ENCODE measurements at regions of chrX and their contacts with region 1.

Region 1: DNA sequence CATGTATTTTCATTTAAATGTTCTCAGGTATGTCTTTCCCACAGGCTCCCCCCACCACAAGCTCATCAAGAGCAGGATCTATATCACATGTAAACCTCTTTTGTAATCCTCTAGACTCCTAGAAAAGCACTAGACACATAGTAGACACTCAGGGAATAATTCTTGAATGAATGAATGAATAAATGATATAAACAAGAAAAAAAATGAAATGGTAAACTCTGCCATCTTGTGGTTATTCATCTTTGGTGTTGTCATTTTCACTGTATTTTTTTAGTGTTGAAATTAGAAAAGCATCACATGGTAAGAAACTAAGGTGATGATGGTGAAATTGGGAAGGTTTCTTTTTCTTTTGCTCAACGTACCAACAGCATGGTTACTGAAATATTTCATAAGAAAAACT is 34.2 kb upstream of the C1GALT1C1 start:
- DNase-seq: no peak
- ATAC-seq: no peak
- H3K4me3 ChIP-seq: no peak overlapping the region
- H3K27ac ChIP-seq: no peak overlapping the region
- H3K4me1 ChIP-seq: no peaks in the 10 kb centered on the region
- H3K27me3 ChIP-seq: no peaks in the 10 kb centered on the region
- CTCF ChIP-seq: peak in 5 of 9 donors; percentile 28 to 42 (median 34)

Region 2: GRCh38 chrX:120499301-120500072 is 164.6 kb before region 1 on chrX:
- intact Hi-C with region 1: loop called in 6 of 10 experiments (anchors 5 to 10 kb)
- DNase-seq: peak in 1 of 2 donors; percentile 11
- ATAC-seq: no peak
- H3K4me3 ChIP-seq: no peak overlapping the region
- H3K27ac ChIP-seq: no peak overlapping the region
- H3K4me1 ChIP-seq: peaks cover 0 to 3% (median 0%) of the 10 kb centered on the region in 9 donors
- H3K27me3 ChIP-seq: no peaks in the 10 kb centered on the region
- CTCF ChIP-seq: no peak

Measured in heart right ventricle (tissue), 16 donors.